Gastrocnemius medialis (tissue), 4 donors: ENCODE measurements at regions of chr4 and their contacts with region 1.

Region 1: GRCh38 chr4:134636338-134637051 is 434.9 kb upstream of the PABPC4L start:
- DNase-seq: no peak
- ATAC-seq: no peak
- H3K4me3 ChIP-seq: no peak overlapping the region
- H3K27ac ChIP-seq: no peak overlapping the region
- H3K4me1 ChIP-seq: no peaks in the 10 kb centered on the region
- H3K27me3 ChIP-seq: no peaks in the 10 kb centered on the region
- CTCF ChIP-seq: no peak
- POLR2A ChIP-seq: no peak

Region 2: GRCh38 chr4:134260126-134260525 is 376.4 kb before region 1 on chr4:
- in situ Hi-C with region 1: no loop called
- intact Hi-C with region 1: no loop called
- DNase-seq: no peak
- ATAC-seq: no peak
- H3K4me3 ChIP-seq: no peak overlapping the region
- H3K27ac ChIP-seq: no peak overlapping the region
- H3K4me1 ChIP-seq: no peaks in the 10 kb centered on the region
- H3K27me3 ChIP-seq: no peaks in the 10 kb centered on the region
- CTCF ChIP-seq: no peak
- POLR2A ChIP-seq: no peak

Region 3: GRCh38 chr4:135164601-135165000 is 528.1 kb after region 1 on chr4:
- in situ Hi-C with region 1: no loop called
- intact Hi-C with region 1: loop called (anchors 5 kb)
- DNase-seq: no peak
- ATAC-seq: no peak
- H3K4me3 ChIP-seq: no peak overlapping the region
- H3K27ac ChIP-seq: no peak overlapping the region
- H3K4me1 ChIP-seq: no peaks in the 10 kb centered on the region
- H3K27me3 ChIP-seq: no peaks in the 10 kb centered on the region
- CTCF ChIP-seq: no peak
- POLR2A ChIP-seq: no peak